AG04449 (cell line): ENCODE measurements at regions of chr9 and their contacts with region 1.

Region 1: GRCh38 chr9:757246-757881 is 84.1 kb upstream of the DMRT1 start:
- DNase-seq: no peak
- H3K4me3 ChIP-seq: no peak overlapping the region
- CTCF ChIP-seq: peak; percentile 67

Region 2: DNA sequence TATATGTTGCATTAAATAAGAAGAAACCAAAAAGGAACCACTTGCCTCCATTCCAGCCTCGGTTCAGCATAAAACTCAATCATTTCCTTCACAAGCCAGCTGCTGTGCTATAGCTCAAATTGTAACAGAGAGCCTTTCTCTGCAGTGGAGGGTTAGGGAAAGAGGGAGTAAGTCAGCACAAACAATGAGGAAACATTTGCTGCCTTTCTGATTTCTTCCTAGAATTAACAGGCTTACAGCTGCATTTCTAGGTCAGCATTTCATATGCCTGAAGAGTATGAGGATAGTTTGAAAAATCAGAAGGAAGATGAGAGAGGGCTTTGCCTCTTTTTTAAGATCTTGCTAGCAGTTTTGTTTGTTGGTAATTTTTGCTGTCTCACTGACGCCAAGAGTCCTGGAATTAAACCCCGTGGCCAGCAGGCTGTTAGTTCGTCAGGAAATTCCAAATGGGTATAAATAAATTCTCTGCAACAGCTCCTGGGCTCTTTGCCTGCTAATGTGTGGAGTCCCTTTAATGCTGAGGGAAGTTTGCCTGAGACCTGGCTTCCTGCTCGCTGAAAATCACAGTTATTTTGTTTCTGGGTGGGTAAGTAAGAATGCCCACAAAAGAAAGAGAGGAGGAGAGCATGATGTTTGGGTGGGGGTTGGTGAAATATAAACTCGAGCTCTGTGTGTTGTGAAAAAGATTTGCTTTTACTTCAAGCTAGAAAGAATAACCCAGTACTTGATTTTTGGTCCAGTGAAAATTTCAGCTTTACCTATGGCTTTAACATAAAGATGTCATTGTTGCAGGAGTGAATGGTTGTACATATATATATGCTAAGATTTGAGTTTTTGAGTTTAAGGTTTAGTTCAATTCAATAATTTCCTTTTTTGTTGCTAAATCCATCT is 63.9 kb before region 1 on chr9:
- CTCF ChIA-PET with region 1: interaction called, 10 read pairs
- POLR2A ChIA-PET with region 1: interaction called, 4 read pairs
- DNase-seq: peak; percentile 63
- H3K4me3 ChIP-seq: peak overlapping the region; percentile 37
- CTCF ChIP-seq: no peak

Region 3: DNA sequence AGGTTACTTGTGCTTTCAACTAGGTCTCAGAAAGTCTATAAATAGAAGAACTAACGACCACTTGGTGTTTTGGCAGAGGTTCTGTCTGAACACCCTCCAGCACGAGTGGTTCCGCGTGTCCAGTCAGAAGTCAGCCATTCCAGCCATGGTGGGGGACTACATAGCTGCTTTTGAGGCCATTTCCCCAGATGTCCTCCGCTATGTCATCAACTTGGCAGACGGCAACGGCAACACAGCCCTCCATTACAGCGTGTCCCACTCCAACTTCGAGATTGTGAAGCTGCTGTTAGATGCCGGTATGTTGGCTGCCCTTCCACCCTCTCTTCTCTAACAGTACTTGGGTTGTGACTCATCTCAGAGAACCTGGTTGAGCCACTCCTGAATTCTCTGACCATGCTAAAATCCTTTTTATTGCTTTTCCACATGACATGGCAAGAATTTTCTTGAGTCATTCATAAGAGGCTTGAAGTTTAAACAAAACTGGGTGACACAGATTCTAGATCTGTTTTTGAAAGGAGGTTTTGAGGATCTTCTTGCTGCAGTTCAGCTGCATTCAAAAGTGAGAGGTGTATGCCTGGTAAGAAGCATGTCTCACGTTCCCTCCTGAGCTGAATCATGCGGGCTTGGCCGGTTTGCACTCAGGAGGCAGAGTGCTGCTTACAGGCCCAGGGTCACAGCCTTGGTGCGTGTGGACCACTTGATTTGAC is 19.0 kb before region 1 on chr9:
- CTCF ChIA-PET with region 1: interaction called, 17 read pairs
- POLR2A ChIA-PET with region 1: interaction called, 7 read pairs
- DNase-seq: peak; percentile 90
- H3K4me3 ChIP-seq: no peak overlapping the region
- CTCF ChIP-seq: no peak